T-cell (primary cell): ENCODE measurements at regions of chr4 and their contacts with region 1.

Region 1: GRCh38 chr4:25330905-25331808 is 18.6 kb downstream of the ZCCHC4 start:
- DNase-seq: peak in 1 of 35 experiments; percentile 29
- ATAC-seq: peak; percentile 47 to 62 (median 49)
- H3K4me3 ChIP-seq: peak overlapping the region in 1 of 2 donors; percentile 45
- H3K4me3 Mint-ChIP-seq: peak overlapping the region; percentile 76 to 86 (median 77)
- H3K27ac ChIP-seq: peak overlapping the region; percentile 84
- H3K27ac Mint-ChIP-seq: peak overlapping the region; percentile 93
- H3K4me1 ChIP-seq: peaks cover 0 to 14% of the 10 kb centered on the region in 2 experiments
- H3K4me1 Mint-ChIP-seq: peaks cover 19 to 20% (median 20%) of the 10 kb centered on the region in 3 donors
- H3K27me3 ChIP-seq: no peaks in the 10 kb centered on the region
- H3K27me3 Mint-ChIP-seq: no peaks in the 10 kb centered on the region

Region 2: GRCh38 chr4:24980064-24980690 is 351.0 kb before region 1 on chr4:
- CTCF ChIA-PET with region 1: interaction called in 1 of 2 experiments, 10 read pairs
- POLR2A ChIA-PET with region 1: no interaction called
- DNase-seq: peak in 29 of 35 experiments; percentile 2 to 69 (median 25)
- ATAC-seq: peak in 1 of 4 experiments; percentile 33
- H3K4me3 ChIP-seq: no peak overlapping the region
- H3K4me3 Mint-ChIP-seq: peak overlapping the region in 2 of 3 donors; percentile 38 to 56
- H3K27ac ChIP-seq: no peak overlapping the region
- H3K27ac Mint-ChIP-seq: no peak overlapping the region
- H3K4me1 ChIP-seq: peaks cover 0 to 8% of the 10 kb centered on the region in 2 experiments
- H3K4me1 Mint-ChIP-seq: peaks cover 7 to 11% (median 9%) of the 10 kb centered on the region in 3 donors
- H3K27me3 ChIP-seq: peaks cover 0 to 10% of the 10 kb centered on the region in 2 experiments
- H3K27me3 Mint-ChIP-seq: peaks cover 23 to 24% of the 10 kb centered on the region in 2 donors

Region 3: GRCh38 chr4:27040356-27040755 is 1709.2 kb after region 1 on chr4:
- CTCF ChIA-PET with region 1: no interaction called
- POLR2A ChIA-PET with region 1: interaction called in 1 of 2 experiments, 10 read pairs
- DNase-seq: no peak
- ATAC-seq: no peak
- H3K4me3 ChIP-seq: no peak overlapping the region
- H3K4me3 Mint-ChIP-seq: no peak overlapping the region
- H3K27ac ChIP-seq: no peak overlapping the region
- H3K27ac Mint-ChIP-seq: no peak overlapping the region
- H3K4me1 ChIP-seq: peaks cover 2 to 6% of the 10 kb centered on the region in 2 experiments
- H3K4me1 Mint-ChIP-seq: peaks cover 5 to 9% (median 6%) of the 10 kb centered on the region in 3 donors
- H3K27me3 ChIP-seq: peaks cover 0 to 4% of the 10 kb centered on the region in 2 experiments
- H3K27me3 Mint-ChIP-seq: peaks cover 21 to 24% of the 10 kb centered on the region in 2 donors